ENCODE measurements at regions of chr3 and their contacts with region 1.

Region 1: GRCh38 chr3:27861046-27862036 is 139.2 kb upstream of the EOMES start:
- DNase-seq: no peak

Region 2: DNA sequence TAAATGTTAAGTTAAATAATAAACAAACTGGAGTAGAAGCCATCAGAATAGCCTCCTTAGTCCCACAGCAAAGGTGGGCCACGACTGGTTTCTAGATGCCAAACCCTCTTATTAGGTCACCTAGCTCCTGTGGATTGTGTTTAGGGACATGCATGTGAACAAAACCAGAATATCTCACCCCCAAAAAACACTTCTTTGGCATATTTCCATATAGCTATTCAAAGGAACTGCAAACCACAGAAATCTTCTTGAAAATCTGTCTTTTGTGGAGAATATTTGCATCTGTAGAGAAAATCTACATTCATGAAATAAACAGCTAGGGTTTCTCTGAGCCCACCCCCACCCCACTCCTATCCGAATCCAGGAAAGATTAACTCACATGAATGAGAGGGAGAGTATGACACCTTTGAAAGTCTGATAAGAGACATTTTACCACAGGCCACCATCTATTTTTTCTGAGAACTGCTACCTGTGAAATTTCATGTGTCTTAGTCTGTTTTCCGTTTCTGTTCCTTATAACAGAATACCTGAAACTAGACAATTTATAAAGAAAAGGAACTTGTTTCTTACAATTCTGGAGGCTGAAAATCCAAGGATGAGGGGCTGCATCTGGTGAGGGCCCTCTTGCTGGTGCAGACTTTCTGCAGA is 651.6 kb before region 1 on chr3:
- intact Hi-C with region 1: loop called in 1 of 2 experiments (anchors 5 kb)
- DNase-seq: no peak

Region 3: DNA sequence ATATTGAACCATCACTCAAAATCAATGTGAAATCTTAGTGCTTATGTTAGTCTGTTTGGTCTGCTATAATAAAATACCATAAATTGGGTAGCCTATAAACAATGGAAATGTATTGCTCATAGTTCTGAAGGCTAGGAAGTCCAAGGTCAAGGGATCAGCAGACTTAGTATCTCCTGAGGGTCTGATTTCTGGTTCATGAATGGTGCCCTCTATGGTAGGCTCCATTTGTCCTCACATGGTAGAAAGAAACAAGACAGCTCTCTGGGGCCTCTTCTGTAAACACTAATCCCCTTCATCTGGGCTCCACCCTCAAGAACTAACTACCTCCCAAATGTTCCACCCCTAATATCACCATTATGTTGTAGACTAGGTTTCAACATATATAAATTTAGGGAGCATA is 124.2 kb before region 1 on chr3:
- intact Hi-C with region 1: no loop called
- DNase-seq: no peak

Region 4: GRCh38 chr3:29453284-29454001 is 1592.1 kb after region 1 on chr3:
- intact Hi-C with region 1: no loop called
- DNase-seq: no peak

Measured in posterior vena cava (tissue), 2 donors.